ENCODE measurements at regions of chr4 and their contacts with region 1.

Region 1: GRCh38 chr4:56799824-56800756 is 21.4 kb downstream of the SPINK2 start:
- DNase-seq: peak; percentile 90
- H3K4me3 ChIP-seq: peak overlapping the region; percentile 18 to 63 (median 48)
- H3K27ac ChIP-seq: peak overlapping the region; percentile 70 to 79 (median 78)
- H3K4me1 ChIP-seq: peaks cover 4 to 10% (median 7%) of the 10 kb centered on the region in 4 donors
- H3K27me3 ChIP-seq: no peaks in the 10 kb centered on the region
- CTCF ChIP-seq: peak; percentile 85 to 93 (median 90)
- EP300 ChIP-seq: no peak
- POLR2A ChIP-seq: no peak

Region 2: GRCh38 chr4:56424697-56425514 is 375.2 kb before region 1 on chr4:
- in situ Hi-C with region 1: loop called in 1 of 4 experiments (anchors 10 kb)
- intact Hi-C with region 1: no loop called
- DNase-seq: peak; percentile 13
- H3K4me3 ChIP-seq: no peak overlapping the region
- H3K27ac ChIP-seq: no peak overlapping the region
- H3K4me1 ChIP-seq: no peaks in the 10 kb centered on the region
- H3K27me3 ChIP-seq: no peaks in the 10 kb centered on the region
- CTCF ChIP-seq: peak; percentile 57 to 71 (median 66)
- EP300 ChIP-seq: no peak
- POLR2A ChIP-seq: no peak

Region 3: DNA sequence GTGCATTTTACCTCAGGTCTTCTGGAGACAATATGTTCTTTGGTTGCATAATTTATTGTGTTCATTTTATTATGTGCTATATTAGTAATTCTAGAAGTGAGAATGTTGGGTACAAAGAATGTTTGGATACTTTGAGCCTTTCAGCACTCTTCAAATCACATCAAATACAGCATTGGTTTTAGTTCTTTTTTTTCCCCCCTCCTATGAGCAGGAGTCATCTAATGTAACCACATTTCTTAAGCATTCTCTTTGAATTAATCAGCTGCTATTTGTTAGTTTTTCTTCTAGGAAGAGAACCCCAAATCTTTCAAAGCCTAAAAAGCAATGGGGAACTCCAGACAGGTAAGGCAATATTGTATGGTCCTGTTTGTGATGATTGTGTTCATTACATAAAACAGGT is 247.8 kb before region 1 on chr4:
- in situ Hi-C with region 1: loop called in 3 of 4 experiments (anchors 10 to 25 kb)
- intact Hi-C with region 1: no loop called
- DNase-seq: no peak
- H3K4me3 ChIP-seq: no peak overlapping the region
- H3K27ac ChIP-seq: no peak overlapping the region
- H3K4me1 ChIP-seq: no peaks in the 10 kb centered on the region
- H3K27me3 ChIP-seq: peaks cover 6% of the 10 kb centered on the region
- CTCF ChIP-seq: no peak
- EP300 ChIP-seq: no peak
- POLR2A ChIP-seq: no peak

Region 4: GRCh38 chr4:56570041-56570440 is 230.0 kb before region 1 on chr4:
- in situ Hi-C with region 1: loop called in 2 of 4 experiments (anchors 25 kb)
- intact Hi-C with region 1: loop called (anchors 5 kb)
- DNase-seq: no peak
- H3K4me3 ChIP-seq: no peak overlapping the region
- H3K27ac ChIP-seq: no peak overlapping the region
- H3K4me1 ChIP-seq: no peaks in the 10 kb centered on the region
- H3K27me3 ChIP-seq: no peaks in the 10 kb centered on the region
- CTCF ChIP-seq: no peak
- EP300 ChIP-seq: no peak
- POLR2A ChIP-seq: no peak

Region 5: DNA sequence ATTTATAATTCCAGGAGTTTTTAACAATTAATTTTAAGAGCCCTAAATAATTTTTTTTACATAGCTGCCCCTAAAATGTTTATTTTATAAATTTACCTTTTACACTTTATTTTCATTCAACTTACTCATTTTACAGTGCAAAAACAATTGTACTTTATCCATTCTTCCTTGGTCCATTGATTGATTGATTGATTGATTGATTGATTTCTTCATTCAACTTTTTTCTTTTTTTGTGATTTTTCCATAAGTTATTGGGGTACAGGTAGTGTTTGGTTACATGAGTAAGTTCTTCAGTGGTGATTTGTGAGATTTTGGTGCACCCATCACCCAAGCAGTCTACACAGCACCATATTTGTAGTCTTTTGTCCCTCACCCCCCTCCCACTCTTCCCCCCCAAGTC is 213.0 kb before region 1 on chr4:
- in situ Hi-C with region 1: loop called in 1 of 4 experiments (anchors 10 kb)
- intact Hi-C with region 1: no loop called
- DNase-seq: no peak
- H3K4me3 ChIP-seq: no peak overlapping the region
- H3K27ac ChIP-seq: no peak overlapping the region
- H3K4me1 ChIP-seq: no peaks in the 10 kb centered on the region
- H3K27me3 ChIP-seq: no peaks in the 10 kb centered on the region
- CTCF ChIP-seq: no peak
- EP300 ChIP-seq: no peak
- POLR2A ChIP-seq: no peak

Region 6: GRCh38 chr4:56668298-56668697 is 131.8 kb before region 1 on chr4:
- in situ Hi-C with region 1: loop called in 2 of 4 experiments (anchors 10 kb)
- intact Hi-C with region 1: loop called (anchors 10 kb)
- DNase-seq: peak; percentile 15
- H3K4me3 ChIP-seq: no peak overlapping the region
- H3K27ac ChIP-seq: no peak overlapping the region
- H3K4me1 ChIP-seq: no peaks in the 10 kb centered on the region
- H3K27me3 ChIP-seq: peaks cover 8% of the 10 kb centered on the region
- CTCF ChIP-seq: peak; percentile 38 to 70 (median 51)
- EP300 ChIP-seq: no peak
- POLR2A ChIP-seq: no peak

Region 7: GRCh38 chr4:56850910-56851309 is 50.8 kb after region 1 on chr4:
- in situ Hi-C with region 1: no loop called
- intact Hi-C with region 1: no loop called
- DNase-seq: no peak
- H3K4me3 ChIP-seq: no peak overlapping the region
- H3K27ac ChIP-seq: no peak overlapping the region
- H3K4me1 ChIP-seq: no peaks in the 10 kb centered on the region
- H3K27me3 ChIP-seq: no peaks in the 10 kb centered on the region
- CTCF ChIP-seq: no peak
- EP300 ChIP-seq: no peak
- POLR2A ChIP-seq: no peak

Region 8: DNA sequence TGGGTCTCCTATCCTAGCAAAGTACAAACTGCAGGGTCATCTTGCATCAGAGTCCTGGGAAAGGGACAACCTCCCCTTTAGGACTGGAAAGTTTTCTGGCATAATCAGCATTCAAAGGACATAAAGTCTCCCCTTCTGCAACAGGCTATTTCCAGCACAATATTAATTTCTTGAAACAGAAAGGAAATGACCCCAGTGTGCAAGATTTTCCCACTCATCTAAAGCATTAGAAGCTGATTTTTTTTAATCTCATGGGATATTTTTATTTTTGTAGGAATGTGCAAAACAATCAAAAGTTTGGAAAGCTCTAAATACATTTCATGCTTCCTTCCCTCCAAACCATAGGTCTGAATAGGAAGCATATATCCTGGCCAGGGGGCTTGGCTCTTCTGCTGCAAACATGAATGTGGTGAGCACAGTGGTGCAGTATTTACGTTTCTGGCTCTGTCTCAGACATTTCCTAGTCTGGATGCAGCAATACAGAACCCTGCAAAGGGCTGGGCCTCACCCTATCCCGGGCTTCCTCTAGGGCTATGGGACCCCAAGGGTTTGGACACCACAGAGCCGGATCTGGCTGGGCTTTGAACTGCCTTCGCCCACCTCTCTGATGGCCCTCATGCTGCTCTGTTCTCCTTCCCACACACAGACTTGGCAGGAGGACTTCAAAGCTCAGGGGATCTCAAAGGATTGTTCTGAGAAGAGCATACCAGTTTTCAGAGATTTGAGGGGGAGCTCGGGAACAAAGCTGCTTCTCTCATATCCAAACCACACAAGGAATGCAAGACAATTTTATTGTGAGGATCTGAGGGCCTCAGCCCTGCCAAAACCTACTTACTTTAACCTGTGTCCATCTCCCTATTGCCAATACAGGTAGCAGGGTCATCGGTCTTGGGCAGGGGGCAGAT is 243.5 kb after region 1 on chr4:
- in situ Hi-C with region 1: no loop called
- intact Hi-C with region 1: no loop called
- DNase-seq: no peak
- H3K4me3 ChIP-seq: no peak overlapping the region
- H3K27ac ChIP-seq: peak overlapping the region; percentile 40 to 71 (median 62)
- H3K4me1 ChIP-seq: peaks cover 0 to 33% (median 4%) of the 10 kb centered on the region in 4 donors
- H3K27me3 ChIP-seq: no peaks in the 10 kb centered on the region
- CTCF ChIP-seq: no peak
- EP300 ChIP-seq: no peak
- POLR2A ChIP-seq: no peak

Measured in transverse colon (tissue), 4 donors.